Heart right ventricle (tissue), 16 donors: ENCODE measurements at regions of chr19 and their contacts with region 1.

Region 1: GRCh38 chr19:9796113-9796773 is 22.6 kb downstream of the FBXL12 start:
- DNase-seq: peak; percentile 60 to 89
- ATAC-seq: peak in 6 of 8 donors; percentile 10 to 37 (median 31)
- H3K4me3 ChIP-seq: no peak overlapping the region
- H3K27ac ChIP-seq: peak overlapping the region in 1 of 10 donors; percentile 11
- H3K4me1 ChIP-seq: peaks cover 0 to 17% (median 3%) of the 10 kb centered on the region in 9 donors
- H3K27me3 ChIP-seq: no peaks in the 10 kb centered on the region
- CTCF ChIP-seq: peak; percentile 61 to 90 (median 82)

Region 2: DNA sequence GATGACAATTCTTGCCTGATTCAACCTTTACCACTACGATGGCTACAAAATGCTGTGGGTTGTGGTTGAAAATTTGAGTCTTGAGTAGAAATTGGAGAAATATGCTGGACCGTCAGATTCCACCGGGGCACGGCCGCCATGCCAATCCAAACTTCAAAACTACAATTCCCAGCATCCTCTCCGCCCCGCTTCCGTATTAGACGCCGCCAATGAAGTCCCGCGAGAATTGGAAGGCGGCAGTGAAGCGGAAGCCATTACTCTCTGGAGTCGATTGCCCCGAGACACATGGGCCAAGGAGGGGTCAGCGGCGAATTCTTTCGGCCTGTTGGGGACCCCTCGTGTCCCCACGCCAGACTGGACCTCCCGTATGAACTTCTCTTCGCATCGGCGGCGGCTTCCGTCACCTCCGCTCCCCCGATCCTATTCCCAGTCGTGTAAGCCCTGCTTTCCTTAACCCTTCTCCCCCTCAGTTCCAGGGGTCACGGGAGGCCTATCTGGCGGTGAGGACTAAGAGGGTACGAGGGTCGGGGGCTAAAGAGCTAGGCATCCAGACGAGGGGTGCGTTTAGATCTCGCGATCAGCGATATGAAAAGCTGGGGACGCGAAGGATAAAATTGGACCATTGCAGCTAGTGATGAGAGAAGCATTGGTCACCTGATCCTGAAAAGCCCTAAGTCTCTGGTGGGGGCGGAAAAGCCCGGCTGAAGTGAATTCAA is 655.9 kb before region 1 on chr19 and contains the start of gene ZNF317:
- intact Hi-C with region 1: loop called in 6 of 10 experiments (anchors 5 to 10 kb)
- DNase-seq: peak; percentile 88 to 95
- ATAC-seq: peak; percentile 97 to 99 (median 98)
- H3K4me3 ChIP-seq: peak within 1 kb of the TSS; percentile 64 to 95 (median 84)
- H3K27ac ChIP-seq: peak within 1 kb of the TSS; percentile 59 to 94 (median 90)
- H3K4me1 ChIP-seq: peaks cover 0 to 30% (median 21%) of the 10 kb centered on the region in 9 donors
- H3K27me3 ChIP-seq: no peaks in the 10 kb centered on the region
- CTCF ChIP-seq: no peak
- total RNA-seq, gene ZNF317: 13.4 to 17.8 (median 15.7) TPM

Region 3: GRCh38 chr19:9309139-9309973 is 486.9 kb before region 1 on chr19 and contains the start of gene ZNF699:
- intact Hi-C with region 1: loop called in 6 of 10 experiments (anchors 5 to 10 kb)
- DNase-seq: peak; percentile 98 to 99
- ATAC-seq: peak; percentile 98 to 99 (median 99)
- H3K4me3 ChIP-seq: peak within 1 kb of the TSS; percentile 59 to 96 (median 82)
- H3K27ac ChIP-seq: peak within 1 kb of the TSS; percentile 92 to 98 (median 96)
- H3K4me1 ChIP-seq: peaks cover 0 to 26% (median 12%) of the 10 kb centered on the region in 9 donors
- H3K27me3 ChIP-seq: no peaks in the 10 kb centered on the region
- CTCF ChIP-seq: no peak
- total RNA-seq, gene ZNF699: 2.7 to 6.5 (median 4.2) TPM

Region 4: DNA sequence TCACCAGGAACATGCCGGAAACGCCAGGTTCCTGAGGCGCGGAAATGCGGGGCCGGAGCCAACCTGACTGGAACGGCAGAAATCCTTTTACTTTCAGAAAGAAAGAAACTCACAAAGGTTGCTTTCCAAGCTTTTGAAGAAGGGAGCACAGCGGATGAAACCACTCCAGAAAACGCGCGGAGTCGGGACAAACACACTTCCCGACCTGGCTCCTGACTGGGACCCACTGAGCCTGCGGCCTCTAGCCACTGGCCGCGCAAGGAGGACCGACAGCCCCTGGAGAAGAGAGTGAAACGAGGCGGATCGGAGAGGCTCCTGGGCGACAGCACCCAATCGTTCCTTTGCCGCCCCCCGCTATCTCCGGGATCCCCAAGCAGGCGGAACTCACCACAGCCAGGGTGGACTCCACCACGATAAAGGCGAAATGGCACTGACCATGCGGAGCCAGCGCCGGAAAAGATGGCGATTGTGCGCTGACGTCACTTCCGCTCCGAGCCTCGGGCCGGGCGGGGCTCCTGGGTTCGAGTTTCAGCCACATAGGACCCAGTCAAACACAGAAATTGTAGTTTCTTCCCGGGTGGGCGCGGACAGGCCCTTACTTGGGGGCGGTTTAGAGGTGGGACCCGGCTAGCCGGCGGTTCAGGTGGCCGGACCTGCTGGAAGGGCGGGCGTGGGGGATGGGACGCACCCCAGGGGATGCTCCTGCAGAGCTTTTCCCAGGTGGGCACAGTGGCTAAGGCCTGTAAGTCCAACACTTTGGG is 212.0 kb before region 1 on chr19 and contains the start of gene ZNF121:
- intact Hi-C with region 1: loop called in 5 of 10 experiments (anchors 1 to 10 kb)
- DNase-seq: peak; percentile 85 to 87
- ATAC-seq: peak; percentile 95 to 98 (median 97)
- H3K4me3 ChIP-seq: peak within 1 kb of the TSS; percentile 55 to 91 (median 78)
- H3K27ac ChIP-seq: peak within 1 kb of the TSS; percentile 72 to 95 (median 91)
- H3K4me1 ChIP-seq: peaks cover 0 to 34% (median 20%) of the 10 kb centered on the region in 9 donors
- H3K27me3 ChIP-seq: peaks cover 0 to 12% (median 1%) of the 10 kb centered on the region in 7 donors
- CTCF ChIP-seq: no peak
- total RNA-seq, gene ZNF121: 15.8 to 22.5 (median 19.6) TPM

Region 5: GRCh38 chr19:9627856-9628255 is 168.4 kb before region 1 on chr19:
- intact Hi-C with region 1: loop called in 9 of 10 experiments (anchors 1 to 5 kb)
- DNase-seq: no peak
- ATAC-seq: no peak
- H3K4me3 ChIP-seq: no peak overlapping the region
- H3K27ac ChIP-seq: no peak overlapping the region
- H3K4me1 ChIP-seq: peaks cover 0 to 9% (median 0%) of the 10 kb centered on the region in 9 donors
- H3K27me3 ChIP-seq: no peaks in the 10 kb centered on the region
- CTCF ChIP-seq: no peak

Region 6: DNA sequence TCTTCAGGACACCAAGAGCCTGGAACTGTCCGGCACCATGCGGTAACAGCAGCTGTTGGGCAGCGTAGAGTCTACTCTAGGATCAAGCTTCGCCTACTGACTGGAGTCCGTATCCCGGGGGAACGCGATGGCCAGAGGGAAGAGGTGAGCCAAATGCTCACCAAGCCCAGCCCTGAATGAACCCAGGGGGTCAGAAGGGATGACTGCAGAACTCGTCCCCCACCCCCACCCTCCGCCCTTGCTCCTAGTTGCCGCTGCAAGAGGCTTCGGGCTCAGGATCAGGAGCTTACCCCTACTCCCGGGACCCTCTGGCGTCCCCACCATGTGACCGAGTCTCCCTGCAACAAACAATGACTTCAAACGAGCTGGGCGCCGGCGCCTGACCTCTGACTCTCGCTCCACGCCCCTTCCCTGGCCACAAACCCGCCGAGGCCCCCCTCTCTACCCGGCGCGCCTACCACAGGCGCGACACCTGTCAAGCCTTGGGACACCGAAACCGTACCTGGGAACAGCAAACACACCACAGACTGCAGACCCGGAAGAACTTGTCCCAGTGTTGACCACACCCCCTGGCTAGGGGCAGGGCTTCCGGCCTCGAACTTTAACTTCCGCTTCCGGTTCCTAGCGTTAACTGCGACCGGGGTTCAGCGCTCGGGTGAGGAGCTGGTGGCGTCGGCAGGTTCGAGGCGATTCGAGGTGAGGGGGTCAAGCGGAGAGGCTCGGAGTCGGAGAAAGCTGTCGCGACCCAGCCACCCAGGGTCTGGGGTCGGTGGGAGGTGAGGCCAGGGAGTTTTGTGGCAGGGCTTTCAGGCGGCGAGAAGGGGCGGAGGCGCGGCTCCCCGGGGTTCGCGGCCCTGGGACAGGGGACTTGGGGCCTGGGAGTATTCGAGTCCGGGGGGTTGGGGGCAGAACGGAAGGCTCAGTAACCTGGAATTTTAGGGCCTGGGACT is 31.3 kb after region 1 on chr19 and contains the start of gene UBL5:
- intact Hi-C with region 1: no loop called
- DNase-seq: peak; percentile 82 to 91
- ATAC-seq: peak; percentile 94 to 98 (median 98)
- H3K4me3 ChIP-seq: peak within 1 kb of the TSS; percentile 66 to 96 (median 86)
- H3K27ac ChIP-seq: peak within 1 kb of the TSS in 9 of 10 donors; percentile 51 to 93 (median 80)
- H3K4me1 ChIP-seq: peaks cover 10 to 31% (median 26%) of the 10 kb centered on the region in 9 donors
- H3K27me3 ChIP-seq: no peaks in the 10 kb centered on the region
- CTCF ChIP-seq: no peak
- total RNA-seq, gene UBL5: 483 to 573 (median 516) TPM

Region 7: DNA sequence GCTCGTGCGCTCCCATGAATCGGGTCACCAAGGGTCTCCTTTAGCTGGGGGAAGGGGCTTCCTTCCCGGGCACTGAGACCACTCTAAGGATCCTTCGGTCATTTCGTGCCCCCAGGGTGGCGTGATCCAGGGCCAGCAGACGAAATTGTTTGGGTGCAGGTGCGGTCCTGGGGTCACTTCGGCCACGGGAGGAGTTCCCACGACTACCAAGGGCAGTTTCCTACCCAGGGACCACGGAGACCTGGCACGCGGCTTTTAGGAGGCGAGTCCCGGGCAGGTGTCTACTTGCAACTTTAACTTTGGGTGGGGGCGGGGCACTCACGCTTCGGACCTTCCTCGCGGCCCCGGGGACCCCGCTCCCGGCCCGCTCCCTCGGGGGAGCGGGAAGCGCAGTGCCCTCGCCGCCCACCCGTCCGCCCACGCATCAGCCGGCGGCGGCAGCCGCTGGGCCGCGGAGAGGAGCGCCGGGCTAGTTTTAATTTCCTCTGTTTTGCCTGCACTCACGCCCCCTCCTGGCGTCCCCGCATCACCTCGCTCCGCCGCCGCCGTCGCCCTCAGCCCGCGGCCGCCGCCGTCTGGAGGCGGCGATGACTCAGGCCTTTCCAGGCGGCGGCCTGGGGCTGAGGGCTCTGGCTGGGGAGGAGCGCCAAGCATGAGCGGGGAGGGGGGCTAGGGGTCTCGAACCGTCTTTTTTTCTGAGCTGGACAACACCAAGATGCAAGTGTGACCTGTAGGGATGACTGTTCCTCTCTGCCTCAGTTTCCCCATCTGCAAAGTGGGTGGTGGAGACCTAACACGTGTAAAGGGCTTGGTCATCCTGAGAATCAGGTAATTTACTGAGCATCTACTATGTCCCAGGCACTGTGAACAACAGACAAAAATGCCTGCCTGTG is 118.3 kb after region 1 on chr19:
- intact Hi-C with region 1: no loop called
- DNase-seq: peak; percentile 49 to 70
- ATAC-seq: peak; percentile 66 to 85 (median 80)
- H3K4me3 ChIP-seq: peak overlapping the region; percentile 15 to 57 (median 46)
- H3K27ac ChIP-seq: peak overlapping the region in 1 of 10 donors; percentile 28
- H3K4me1 ChIP-seq: peaks cover 5 to 20% (median 14%) of the 10 kb centered on the region in 9 donors
- H3K27me3 ChIP-seq: peaks cover 10 to 89% (median 51%) of the 10 kb centered on the region in 7 donors
- CTCF ChIP-seq: peak in 8 of 9 donors; percentile 40 to 70 (median 60)